ENCODE measurements at regions of chr6 and their contacts with region 1.

Region 1: DNA sequence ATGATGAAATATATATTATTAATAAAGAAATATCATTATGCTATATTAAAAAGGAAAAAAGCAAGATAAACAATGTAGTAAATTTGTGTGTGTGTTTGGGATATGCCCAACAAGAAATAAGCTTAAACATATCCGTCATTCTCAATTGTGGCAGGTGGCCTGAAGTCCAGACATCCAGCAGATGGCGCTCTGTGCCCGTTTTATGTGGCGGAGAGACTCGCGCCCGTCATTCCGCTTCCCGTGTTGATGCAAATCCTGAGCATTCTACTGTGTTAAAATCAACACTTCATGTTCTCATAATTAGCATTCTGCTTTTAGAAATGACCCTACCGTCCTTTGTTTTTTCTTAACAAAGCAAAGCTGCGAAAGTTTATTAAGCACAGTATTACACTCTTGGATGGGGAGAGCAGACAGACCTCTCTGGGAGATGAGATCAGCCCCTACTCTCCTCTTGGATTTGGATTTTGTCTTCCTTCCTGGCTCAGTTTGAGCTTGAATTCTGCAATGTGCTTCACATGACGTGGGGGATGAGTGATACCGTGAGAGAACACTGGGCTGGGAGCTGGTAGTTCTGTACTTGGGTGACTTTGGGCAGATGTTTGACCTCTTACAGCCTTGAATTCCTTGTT is 125.8 kb downstream of the MCHR2 start:
- DNase-seq: peak; percentile 87
- H3K4me3 Mint-ChIP-seq: no peak overlapping the region
- H3K27ac Mint-ChIP-seq: no peak overlapping the region
- H3K4me1 Mint-ChIP-seq: peaks cover 5% of the 10 kb centered on the region
- H3K27me3 Mint-ChIP-seq: peaks cover 30% of the 10 kb centered on the region

Region 2: DNA sequence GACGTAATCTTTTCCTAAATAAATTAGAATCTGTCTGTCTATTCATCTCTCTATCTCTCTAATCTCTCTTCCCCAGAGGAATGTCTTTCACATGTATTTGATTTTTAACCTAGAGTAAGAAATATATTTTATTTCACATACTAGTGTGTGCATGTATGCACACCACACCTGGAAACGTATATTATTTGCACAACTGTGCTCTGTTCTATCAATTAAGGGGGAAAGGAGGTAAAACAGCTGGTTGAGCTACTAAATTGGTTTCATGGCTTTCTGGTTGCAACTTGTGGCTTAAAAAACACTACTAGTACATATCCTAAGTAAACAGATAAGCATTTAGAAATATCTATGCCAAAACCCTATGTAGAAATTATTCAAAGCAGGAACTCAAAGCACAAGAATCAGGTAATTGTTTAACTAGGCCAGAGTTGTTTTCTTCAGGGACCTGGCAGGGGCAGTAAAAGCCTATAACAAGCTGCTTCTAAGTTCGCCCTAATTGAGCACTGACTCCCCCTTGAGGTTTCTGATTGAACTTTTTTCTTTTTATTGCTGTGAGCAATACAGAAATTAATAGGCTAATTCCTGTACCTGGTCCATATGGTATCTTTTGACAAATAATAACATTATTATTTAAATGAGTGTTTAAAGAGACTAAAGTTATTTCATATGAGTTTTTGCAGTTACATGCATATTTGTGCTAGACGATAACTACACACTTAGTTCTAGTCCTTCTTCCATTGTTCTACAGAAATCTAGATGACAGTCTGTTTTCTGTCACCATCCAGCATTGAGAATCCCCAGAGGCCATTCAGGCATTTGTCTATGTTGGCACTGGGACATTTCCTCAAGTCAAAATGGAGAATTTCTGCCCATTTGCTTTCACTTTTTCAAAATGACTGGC is 37.3 kb after region 1 on chr6:
- CTCF ChIA-PET with region 1: interaction called, 15 read pairs
- intact Hi-C with region 1: loop called (anchors 1 kb)
- DNase-seq: no peak
- H3K4me3 Mint-ChIP-seq: no peak overlapping the region
- H3K27ac Mint-ChIP-seq: no peak overlapping the region
- H3K4me1 Mint-ChIP-seq: no peaks in the 10 kb centered on the region
- H3K27me3 Mint-ChIP-seq: peaks cover 8% of the 10 kb centered on the region

Region 3: GRCh38 chr6:100001915-100002388 is 133.8 kb after region 1 on chr6:
- CTCF ChIA-PET with region 1: interaction called, 13 read pairs
- intact Hi-C with region 1: loop called (anchors 1 kb)
- DNase-seq: peak; percentile 51
- H3K4me3 Mint-ChIP-seq: no peak overlapping the region
- H3K27ac Mint-ChIP-seq: no peak overlapping the region
- H3K4me1 Mint-ChIP-seq: no peaks in the 10 kb centered on the region
- H3K27me3 Mint-ChIP-seq: peaks cover 18% of the 10 kb centered on the region

Region 4: GRCh38 chr6:100099189-100100074 is 231.2 kb after region 1 on chr6:
- CTCF ChIA-PET with region 1: interaction called, 34 read pairs
- intact Hi-C with region 1: loop called (anchors 1 kb)
- DNase-seq: no peak
- H3K4me3 Mint-ChIP-seq: no peak overlapping the region
- H3K27ac Mint-ChIP-seq: no peak overlapping the region
- H3K4me1 Mint-ChIP-seq: no peaks in the 10 kb centered on the region
- H3K27me3 Mint-ChIP-seq: no peaks in the 10 kb centered on the region

Region 5: GRCh38 chr6:100657678-100658330 is 789.6 kb after region 1 on chr6:
- CTCF ChIA-PET with region 1: interaction called, 3 read pairs
- intact Hi-C with region 1: loop called (anchors 2 kb)
- DNase-seq: no peak
- H3K4me3 Mint-ChIP-seq: no peak overlapping the region
- H3K27ac Mint-ChIP-seq: no peak overlapping the region
- H3K4me1 Mint-ChIP-seq: no peaks in the 10 kb centered on the region
- H3K27me3 Mint-ChIP-seq: no peaks in the 10 kb centered on the region

Measured in activated naive CD4-positive, alpha-beta T cell treated with anti-CD3 and anti-CD28 coated beads for 36 hours (primary cell).